ENCODE measurements at regions of chr7 and their contacts with region 1.

Region 1: GRCh38 chr7:151244196-151244840 is 4.2 kb downstream of the SMARCD3 start:
- DNase-seq: peak; percentile 93
- H3K4me3 ChIP-seq: peak overlapping the region; percentile 39 to 46; a peak in 2 of 4 replicates
- H3K27ac ChIP-seq: peak overlapping the region in 1 of 2 experiments; percentile 59; a peak in 1 of 4 replicates
- H3K4me1 ChIP-seq: peaks cover 35 to 45% of the 10 kb centered on the region in 2 experiments
- H3K27me3 ChIP-seq: no peaks in the 10 kb centered on the region
- CTCF ChIP-seq: peak; percentile 100
- EP300 ChIP-seq: peak in 1 of 2 experiments; percentile 59; a peak in 2 of 4 replicates
- RAD21 ChIP-seq: peak; percentile 77

Region 2: GRCh38 chr7:151053096-151053495 is 191.2 kb before region 1 on chr7:
- CTCF ChIA-PET with region 1: no interaction called
- POLR2A ChIA-PET with region 1: no interaction called
- DNase-seq: no peak
- H3K4me3 ChIP-seq: no peak overlapping the region
- H3K27ac ChIP-seq: no peak overlapping the region
- H3K4me1 ChIP-seq: peaks cover 4 to 25% of the 10 kb centered on the region in 2 experiments; a peak in 2 of 4 replicates
- H3K27me3 ChIP-seq: no peaks in the 10 kb centered on the region
- CTCF ChIP-seq: no peak
- EP300 ChIP-seq: no peak
- RAD21 ChIP-seq: no peak

Region 3: GRCh38 chr7:151123822-151124464 is 120.4 kb before region 1 on chr7:
- CTCF ChIA-PET with region 1: interaction called, 17 read pairs
- POLR2A ChIA-PET with region 1: no interaction called
- DNase-seq: peak; percentile 98
- H3K4me3 ChIP-seq: no peak overlapping the region; a peak in 1 of 4 replicates
- H3K27ac ChIP-seq: no peak overlapping the region
- H3K4me1 ChIP-seq: no peaks in the 10 kb centered on the region; a peak in 1 of 4 replicates
- H3K27me3 ChIP-seq: no peaks in the 10 kb centered on the region
- CTCF ChIP-seq: peak; percentile 100
- EP300 ChIP-seq: no peak
- RAD21 ChIP-seq: peak; percentile 98

Region 4: GRCh38 chr7:151226875-151227782 is 17.2 kb before region 1 on chr7 and contains the start of gene ABCF2:
- CTCF ChIA-PET with region 1: interaction called, 122 read pairs
- POLR2A ChIA-PET with region 1: interaction called, 20 read pairs
- DNase-seq: peak; percentile 99
- H3K4me3 ChIP-seq: peak within 1 kb of the TSS; percentile 80 to 97
- H3K27ac ChIP-seq: peak within 1 kb of the TSS; percentile 80 to 96
- H3K4me1 ChIP-seq: peaks cover 10 to 26% of the 10 kb centered on the region in 2 experiments
- H3K27me3 ChIP-seq: no peaks in the 10 kb centered on the region
- CTCF ChIP-seq: peak; percentile 32; the same call in 1 of the 2 replicates
- EP300 ChIP-seq: no peak
- RAD21 ChIP-seq: no peak
- polyA plus RNA-seq, gene ABCF2: 75.4 and 102 TPM in 2 replicates

Region 5: DNA sequence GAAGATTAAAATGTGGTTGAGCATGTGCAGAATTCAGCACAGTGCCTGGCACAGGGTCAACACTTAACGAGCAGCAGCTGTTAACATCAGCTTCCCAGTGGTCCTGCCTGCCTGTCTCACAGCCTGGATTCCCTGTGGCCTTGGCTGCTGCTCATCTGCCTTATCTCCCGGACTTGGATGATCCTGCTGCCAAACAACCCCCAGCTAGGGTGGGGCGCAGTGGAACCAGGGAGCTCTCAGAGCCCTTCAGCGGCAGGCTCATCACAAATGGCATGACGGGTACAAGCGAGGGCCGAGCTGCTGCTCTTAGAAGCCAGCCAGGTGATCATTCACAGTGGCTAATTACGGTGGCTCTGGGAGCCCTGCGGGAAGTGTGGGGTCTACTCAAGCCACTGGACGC is 17.2 kb after region 1 on chr7:
- CTCF ChIA-PET with region 1: interaction called, 30 read pairs
- POLR2A ChIA-PET with region 1: interaction called, 7 read pairs
- DNase-seq: peak; percentile 86
- H3K4me3 ChIP-seq: no peak overlapping the region
- H3K27ac ChIP-seq: no peak overlapping the region
- H3K4me1 ChIP-seq: peaks cover 0 to 14% of the 10 kb centered on the region in 2 experiments; a peak in 1 of 4 replicates
- H3K27me3 ChIP-seq: no peaks in the 10 kb centered on the region
- CTCF ChIP-seq: no peak
- EP300 ChIP-seq: peak in 1 of 2 experiments; percentile 61; a peak in 1 of 4 replicates
- RAD21 ChIP-seq: peak; percentile 15; the same call in 1 of the 2 replicates

Region 6: GRCh38 chr7:151286148-151286547 is 41.8 kb after region 1 on chr7:
- CTCF ChIA-PET with region 1: interaction called, 16 read pairs
- POLR2A ChIA-PET with region 1: no interaction called
- DNase-seq: no peak
- H3K4me3 ChIP-seq: no peak overlapping the region
- H3K27ac ChIP-seq: no peak overlapping the region
- H3K4me1 ChIP-seq: no peaks in the 10 kb centered on the region
- H3K27me3 ChIP-seq: peaks cover 40% of the 10 kb centered on the region; the same call in 1 of the 2 replicates
- CTCF ChIP-seq: no peak
- EP300 ChIP-seq: no peak
- RAD21 ChIP-seq: no peak

Region 7: DNA sequence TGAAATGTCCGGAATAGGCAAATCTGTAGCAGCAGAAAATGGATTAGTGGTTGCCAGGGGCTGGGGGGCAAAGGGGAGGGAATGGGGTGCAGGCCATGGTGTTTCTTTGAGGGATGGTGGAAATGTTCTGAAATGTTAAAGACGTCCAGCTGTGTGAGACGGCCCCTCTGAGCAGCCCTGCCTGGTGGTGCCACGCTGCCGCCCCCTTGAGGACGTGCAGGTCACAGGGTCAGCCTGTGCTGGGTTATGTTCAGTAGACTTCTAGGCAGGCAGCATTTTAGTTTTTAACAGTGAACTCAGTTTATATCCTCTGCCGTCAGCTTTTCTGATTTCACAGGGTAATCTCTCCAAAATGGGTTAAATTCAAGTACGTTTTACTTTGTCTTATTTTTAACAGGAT is 106.7 kb after region 1 on chr7:
- CTCF ChIA-PET with region 1: interaction called, 13 read pairs
- POLR2A ChIA-PET with region 1: no interaction called
- DNase-seq: peak; percentile 48
- H3K4me3 ChIP-seq: no peak overlapping the region
- H3K27ac ChIP-seq: no peak overlapping the region; a peak in 1 of 4 replicates
- H3K4me1 ChIP-seq: peaks cover 5 to 8% of the 10 kb centered on the region in 2 experiments; a peak in 2 of 4 replicates
- H3K27me3 ChIP-seq: no peaks in the 10 kb centered on the region
- CTCF ChIP-seq: peak; percentile 51
- EP300 ChIP-seq: no peak
- RAD21 ChIP-seq: peak; percentile 23; the same call in 1 of the 2 replicates

Region 8: DNA sequence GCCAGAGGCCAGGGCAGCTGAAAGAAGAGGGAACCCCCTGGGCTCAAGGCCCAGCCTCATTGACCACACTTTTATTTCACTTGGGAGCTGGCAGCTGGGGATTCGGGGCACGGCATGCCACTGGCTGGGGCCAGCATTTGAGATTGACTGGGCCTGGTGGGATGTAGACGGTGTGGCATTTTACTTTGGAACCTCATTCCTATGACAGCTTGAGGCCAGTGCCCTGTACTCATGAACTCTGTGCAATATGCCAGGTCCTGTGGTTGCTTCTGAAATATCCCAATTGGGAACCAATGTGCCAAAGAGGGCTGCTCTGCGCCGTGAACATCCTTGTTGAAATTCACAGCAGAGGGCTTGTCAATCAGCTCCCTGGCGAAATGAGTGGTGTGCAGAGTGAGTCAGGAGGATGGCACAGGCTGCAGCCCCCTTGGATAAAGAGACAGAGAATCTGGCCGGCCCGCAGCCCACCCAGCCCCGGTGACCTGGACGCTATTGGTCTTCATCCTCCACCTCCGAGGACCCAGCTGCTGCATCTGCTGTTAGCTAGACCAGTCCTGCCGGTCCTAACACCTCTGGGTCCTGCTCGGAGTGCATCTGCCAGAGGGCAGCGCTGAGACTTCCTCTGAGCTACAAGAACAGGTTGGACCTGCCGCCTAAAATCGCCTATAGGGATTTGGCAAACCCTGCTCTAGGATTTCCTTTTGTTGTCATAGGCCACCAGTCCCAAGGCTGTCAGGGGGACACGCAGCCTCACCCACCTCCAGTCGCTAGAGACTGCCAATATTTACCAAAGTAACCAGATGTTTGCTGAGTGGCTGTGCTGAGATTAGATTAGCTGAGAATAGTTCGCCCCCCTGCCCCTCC is 574.6 kb after region 1 on chr7:
- CTCF ChIA-PET with region 1: no interaction called
- POLR2A ChIA-PET with region 1: no interaction called
- DNase-seq: no peak
- H3K4me3 ChIP-seq: no peak overlapping the region
- H3K27ac ChIP-seq: no peak overlapping the region
- H3K4me1 ChIP-seq: peaks cover 0 to 21% of the 10 kb centered on the region in 2 experiments; a peak in 1 of 4 replicates
- H3K27me3 ChIP-seq: peaks cover 43% of the 10 kb centered on the region
- CTCF ChIP-seq: no peak
- EP300 ChIP-seq: no peak
- RAD21 ChIP-seq: no peak

Region 9: DNA sequence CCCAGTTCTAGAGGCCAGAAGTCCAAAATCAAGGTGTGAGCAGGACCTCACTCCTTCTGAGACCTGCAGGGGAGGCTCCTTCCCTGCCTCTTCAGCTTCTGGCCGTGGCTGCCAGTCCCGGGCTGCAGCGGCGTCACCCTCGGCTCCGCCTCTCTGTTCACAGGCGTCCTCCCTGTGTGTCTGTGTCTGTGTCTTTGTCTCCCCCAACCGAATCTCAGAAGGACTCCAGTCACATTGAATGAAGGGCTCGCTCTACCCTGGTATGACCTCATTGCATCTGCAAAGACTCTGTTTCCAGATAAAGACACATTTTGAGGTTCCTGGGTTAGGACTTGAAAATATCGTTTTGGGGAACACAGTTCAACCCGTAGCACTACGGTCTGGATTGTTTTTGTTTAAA is 748.1 kb after region 1 on chr7:
- CTCF ChIA-PET with region 1: no interaction called
- POLR2A ChIA-PET with region 1: no interaction called
- DNase-seq: peak; percentile 86
- H3K4me3 ChIP-seq: no peak overlapping the region
- H3K27ac ChIP-seq: no peak overlapping the region
- H3K4me1 ChIP-seq: peaks cover 0 to 3% of the 10 kb centered on the region in 2 experiments; a peak in 2 of 4 replicates
- H3K27me3 ChIP-seq: no peaks in the 10 kb centered on the region
- CTCF ChIP-seq: peak; percentile 19
- EP300 ChIP-seq: 0 out of 4 replicates have a peak, but pooled peaks of 1 of the 2 experiments have one; percentile 10
- RAD21 ChIP-seq: peak; percentile 75